ENCODE measurements at regions of chr16 and their contacts with region 1.

Region 1: GRCh38 chr16:86575754-86576557 is 2.4 kb upstream of the FOXL1 start:
- DNase-seq: peak; percentile 88

Region 2: DNA sequence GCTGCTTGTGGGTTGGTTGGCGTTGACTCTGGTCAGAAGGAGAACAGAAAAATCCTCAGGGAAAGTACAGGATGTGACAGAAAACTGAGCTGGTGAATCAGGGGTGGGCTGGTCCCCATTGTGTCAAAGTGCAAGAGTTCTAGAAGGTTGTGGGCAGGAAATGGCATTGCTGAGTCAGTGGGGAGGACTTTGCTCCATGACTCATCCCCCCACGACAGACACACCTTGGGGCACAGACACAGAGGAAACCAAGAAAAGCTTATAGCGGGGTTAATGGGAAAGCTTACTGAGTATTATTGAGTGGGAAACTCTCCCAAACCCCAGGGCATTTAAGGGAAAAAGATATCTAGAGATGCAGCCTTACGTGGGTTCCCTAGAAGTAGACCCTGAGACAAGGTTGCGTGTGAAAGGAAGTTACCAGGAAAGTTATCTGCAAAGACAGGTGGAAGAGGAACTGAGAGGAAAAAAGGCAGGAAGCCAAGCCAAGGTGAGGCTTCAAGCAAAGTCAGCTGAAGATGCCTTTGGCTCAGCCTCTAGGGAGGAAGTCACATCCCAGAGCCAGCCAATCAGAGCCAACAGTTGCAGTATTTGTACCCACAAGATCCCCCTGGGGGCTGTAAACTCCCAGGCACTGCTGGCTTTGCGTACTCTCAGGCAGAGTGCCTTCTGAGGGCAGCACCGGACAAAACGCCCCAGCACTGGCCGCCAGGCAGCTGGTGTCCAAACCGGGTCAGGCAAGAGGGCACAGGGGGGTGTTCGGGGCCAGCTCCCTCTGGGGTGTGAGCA is 88.8 kb after region 1 on chr16:
- intact Hi-C with region 1: loop called (anchors 5 kb)
- DNase-seq: no peak

Region 3: DNA sequence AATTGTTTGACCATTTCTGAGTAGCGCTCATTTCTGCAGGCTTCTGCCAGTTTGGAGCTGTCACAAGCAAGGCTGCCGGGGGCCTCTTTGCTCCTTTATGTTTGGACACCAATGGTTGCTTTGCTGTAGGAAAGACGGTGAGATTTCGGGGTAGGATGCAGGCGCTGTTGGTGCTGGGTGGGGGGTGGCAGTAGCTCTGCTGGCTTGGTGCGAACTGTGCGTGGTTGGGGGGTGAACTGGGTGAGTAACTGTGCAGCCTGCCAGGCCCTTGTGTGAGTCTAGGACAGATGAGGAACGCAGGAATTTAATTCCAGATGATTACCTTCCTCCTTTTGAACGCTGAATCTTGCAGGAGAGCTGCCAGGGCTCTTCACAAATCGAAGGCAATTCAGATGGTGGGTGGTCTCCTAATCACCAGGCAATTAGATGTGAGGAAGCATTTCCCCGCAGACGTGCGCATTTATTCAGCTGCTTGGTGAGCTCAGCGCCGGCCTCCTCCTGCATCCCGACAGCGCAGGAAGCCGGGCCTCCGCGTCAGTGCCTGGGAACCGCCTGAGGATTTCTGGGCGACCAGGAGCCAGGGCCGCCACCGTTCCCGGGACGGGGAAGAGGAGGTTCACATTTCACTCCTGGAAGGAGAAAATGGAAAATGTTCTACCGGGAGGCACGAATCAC is 156.8 kb after region 1 on chr16:
- intact Hi-C with region 1: no loop called
- DNase-seq: no peak

Region 4: GRCh38 chr16:86761111-86762031 is 185.4 kb after region 1 on chr16:
- intact Hi-C with region 1: loop called (anchors 5 kb)
- DNase-seq: peak; percentile 7

Region 5: GRCh38 chr16:86834451-86835035 is 258.6 kb after region 1 on chr16:
- intact Hi-C with region 1: loop called (anchors 10 kb)
- DNase-seq: no peak